Aorta (tissue), 5 donors: ENCODE measurements at regions of chr14 and their contacts with region 1.

Region 1: GRCh38 chr14:36975835-36976234 is 196.6 kb downstream of the SLC25A21 start:
- DNase-seq: no peak
- ATAC-seq: no peak
- H3K4me3 ChIP-seq: no peak overlapping the region
- H3K27ac ChIP-seq: no peak overlapping the region
- H3K4me1 ChIP-seq: peaks cover 3 to 7% of the 10 kb centered on the region in 2 donors
- H3K27me3 ChIP-seq: no peaks in the 10 kb centered on the region

Region 2: GRCh38 chr14:37122254-37122653 is 146.4 kb after region 1 on chr14:
- intact Hi-C with region 1: loop called in 1 of 2 experiments (anchors 10 kb)
- DNase-seq: no peak
- ATAC-seq: no peak
- H3K4me3 ChIP-seq: no peak overlapping the region
- H3K27ac ChIP-seq: no peak overlapping the region
- H3K4me1 ChIP-seq: no peaks in the 10 kb centered on the region
- H3K27me3 ChIP-seq: no peaks in the 10 kb centered on the region